Activated T-helper 1 cell treated with anti-CD3 and anti-CD28 coated beads, Interleukin-12 subunit alpha, Interleukin-12 subunit beta, Interleukin-2, Interleukin-4 antibody, amounts not matched to agents 30 ng/mL and 10 ng/mL and 1 ng/mL, durations not matched to agents 14 hours and 24 hours and 36 hours (primary cell): ENCODE measurements at regions of chr1 and their contacts with region 1.

Region 1: DNA sequence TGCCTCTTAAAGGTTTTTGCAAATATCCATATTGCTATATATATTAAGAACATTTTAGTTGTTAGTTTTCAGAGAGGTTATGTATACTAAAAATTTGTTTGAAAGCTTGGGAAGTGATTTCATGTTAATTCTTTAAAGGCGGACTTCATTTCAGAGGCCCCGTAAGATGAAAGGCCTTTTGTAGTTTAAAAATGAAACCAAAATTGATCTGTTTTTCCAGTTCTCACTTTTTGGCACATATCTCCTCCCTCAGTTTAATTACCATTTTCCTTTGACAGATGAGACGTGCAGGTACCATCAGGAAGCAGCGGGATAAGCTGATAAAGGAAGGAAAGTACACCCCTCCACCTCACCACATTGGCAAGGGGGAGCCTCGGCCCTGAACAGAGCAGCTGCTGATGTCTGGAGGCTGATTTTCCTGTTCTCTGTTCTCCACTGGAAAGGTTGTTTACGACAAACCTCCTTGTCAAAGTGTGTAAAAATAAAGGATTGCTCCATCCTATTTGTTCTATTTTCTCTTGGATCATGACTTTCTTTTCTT is 8.0 kb downstream of the NDUFS5 start:
- DNase-seq: no peak
- H3K4me3 Mint-ChIP-seq: peak overlapping the region; percentile 82
- H3K27ac Mint-ChIP-seq: peak overlapping the region; percentile 87
- H3K4me1 Mint-ChIP-seq: peaks cover 37% of the 10 kb centered on the region
- H3K27me3 Mint-ChIP-seq: no peaks in the 10 kb centered on the region

Region 2: DNA sequence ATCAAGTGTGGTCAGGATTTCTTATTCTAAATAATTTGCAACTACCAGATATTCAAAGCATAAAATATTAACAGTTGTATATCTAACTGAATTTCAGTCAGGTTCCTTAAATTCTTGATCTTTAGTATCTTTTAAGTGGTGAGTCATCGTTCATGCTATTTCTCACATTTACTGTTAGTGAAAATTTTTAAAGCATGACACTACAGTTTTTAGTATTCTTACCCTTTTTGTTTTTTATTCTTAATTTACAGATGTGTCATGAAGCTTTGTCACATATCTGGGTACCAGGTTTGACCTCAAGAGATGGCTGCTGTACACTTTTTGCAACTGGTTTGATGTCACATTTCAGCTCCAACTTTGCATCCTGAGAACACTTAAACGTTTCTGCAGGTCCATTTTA is 30.4 kb before region 1 on chr1:
- intact Hi-C with region 1: loop called (anchors 1 kb)
- DNase-seq: no peak
- H3K4me3 Mint-ChIP-seq: no peak overlapping the region
- H3K27ac Mint-ChIP-seq: no peak overlapping the region
- H3K4me1 Mint-ChIP-seq: peaks cover 36% of the 10 kb centered on the region
- H3K27me3 Mint-ChIP-seq: no peaks in the 10 kb centered on the region